Mammary epithelial cell (primary cell): ENCODE measurements at regions of chr7 and their contacts with region 1.

Region 1: GRCh38 chr7:157299613-157300368 is 37.0 kb upstream of the DNAJB6 start:
- DNase-seq: no peak
- H3K4me3 ChIP-seq: no peak overlapping the region
- H3K27ac ChIP-seq: peak overlapping the region; percentile 0
- H3K4me1 ChIP-seq: peaks cover 22% of the 10 kb centered on the region
- H3K27me3 ChIP-seq: no peaks in the 10 kb centered on the region
- CTCF ChIP-seq: peak in 1 of 2 donors; percentile 51

Region 2: GRCh38 chr7:157228864-157229422 is 70.8 kb before region 1 on chr7:
- CTCF ChIA-PET with region 1: no interaction called
- dilution Hi-C with region 1: no loop called
- in situ Hi-C with region 1: no loop called
- intact Hi-C with region 1: no loop called
- DNase-seq: no peak
- H3K4me3 ChIP-seq: no peak overlapping the region
- H3K27ac ChIP-seq: no peak overlapping the region
- H3K4me1 ChIP-seq: peaks cover 8% of the 10 kb centered on the region
- H3K27me3 ChIP-seq: no peaks in the 10 kb centered on the region
- CTCF ChIP-seq: peak; percentile 32 to 51

Region 3: DNA sequence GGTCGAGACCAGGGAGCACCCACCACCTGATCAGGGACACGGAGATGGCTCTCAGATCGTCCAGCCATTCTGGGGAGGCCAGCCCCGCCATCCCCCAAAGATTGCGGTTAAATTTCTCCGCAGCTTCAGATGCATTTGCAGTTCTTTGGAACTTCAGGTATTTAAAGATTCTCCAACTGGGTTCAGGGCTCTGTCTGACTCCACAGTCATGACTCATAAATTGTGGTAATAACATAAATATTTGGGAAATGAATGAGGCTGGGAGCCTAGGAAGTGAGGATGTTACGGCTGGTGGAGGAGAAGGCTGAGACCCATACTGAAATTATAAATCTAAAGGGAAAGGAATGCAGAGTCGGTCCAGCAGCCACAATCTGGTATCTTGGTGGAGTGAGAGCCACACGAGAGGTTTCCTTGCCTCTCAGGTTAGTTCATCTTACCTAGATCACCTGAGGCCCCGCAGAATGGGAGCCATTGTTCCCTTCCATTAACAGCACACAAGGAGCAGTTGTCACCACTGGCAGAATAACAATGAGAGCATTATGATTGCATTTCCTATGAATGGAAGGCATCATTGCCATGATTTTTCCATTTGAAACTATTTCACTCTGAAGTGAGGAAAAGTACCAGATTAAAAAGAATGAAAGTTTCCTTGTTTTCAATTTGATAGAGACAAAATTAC is 10.3 kb after region 1 on chr7:
- CTCF ChIA-PET with region 1: no interaction called
- dilution Hi-C with region 1: no loop called
- in situ Hi-C with region 1: no loop called
- intact Hi-C with region 1: loop called (anchors 1 kb)
- DNase-seq: peak; percentile 98
- H3K4me3 ChIP-seq: no peak overlapping the region
- H3K27ac ChIP-seq: peak overlapping the region; percentile 95
- H3K4me1 ChIP-seq: peaks cover 31% of the 10 kb centered on the region
- H3K27me3 ChIP-seq: no peaks in the 10 kb centered on the region
- CTCF ChIP-seq: no peak